ENCODE measurements at regions of chr2 and their contacts with region 1.

Region 1: DNA sequence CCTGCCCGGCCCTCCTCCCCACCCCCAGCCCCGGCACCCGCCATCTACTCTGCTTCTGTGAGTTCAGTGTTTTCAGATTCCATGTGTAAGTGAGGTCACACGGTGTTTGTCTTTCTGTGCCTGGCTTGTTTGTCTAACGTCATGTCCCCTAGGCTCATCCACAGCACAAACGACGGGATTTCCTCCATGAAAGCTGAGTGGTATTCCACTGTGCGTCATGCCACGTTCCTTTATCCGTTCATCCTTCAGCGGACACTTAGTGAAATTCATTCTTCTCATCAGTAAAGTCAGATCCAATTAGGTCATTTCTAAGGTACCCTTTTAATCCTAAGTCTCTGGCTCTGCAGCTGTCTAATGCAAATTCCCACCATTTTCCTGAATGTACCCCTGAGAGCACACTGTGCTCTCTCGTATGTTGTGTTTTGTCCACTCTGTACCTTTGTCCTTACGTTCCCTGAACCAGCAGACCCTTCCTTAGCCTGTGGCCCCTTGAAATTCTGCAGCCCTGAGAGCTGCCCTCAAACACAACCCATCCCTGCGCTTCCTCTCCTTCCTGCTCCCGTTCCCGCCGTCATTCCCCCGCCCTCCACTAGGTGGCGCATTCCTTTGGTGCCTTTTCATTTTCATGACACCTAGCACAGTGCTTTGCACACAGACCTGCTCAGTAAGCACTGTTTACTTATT is 44.1 kb downstream of the TRAPPC12 start:
- DNase-seq: peak; percentile 38 to 98
- H3K4me3 ChIP-seq: no peak overlapping the region
- H3K27ac ChIP-seq: no peak overlapping the region
- H3K4me1 ChIP-seq: no peaks in the 10 kb centered on the region
- H3K27me3 ChIP-seq: no peaks in the 10 kb centered on the region
- CTCF ChIP-seq: peak; percentile 74 to 99 (median 98)
- EP300 ChIP-seq: no peak
- POLR2A ChIP-seq: no peak
- RAD21 ChIP-seq: peak; percentile 52 to 65; a peak in 3 of 4 replicates

Region 2: DNA sequence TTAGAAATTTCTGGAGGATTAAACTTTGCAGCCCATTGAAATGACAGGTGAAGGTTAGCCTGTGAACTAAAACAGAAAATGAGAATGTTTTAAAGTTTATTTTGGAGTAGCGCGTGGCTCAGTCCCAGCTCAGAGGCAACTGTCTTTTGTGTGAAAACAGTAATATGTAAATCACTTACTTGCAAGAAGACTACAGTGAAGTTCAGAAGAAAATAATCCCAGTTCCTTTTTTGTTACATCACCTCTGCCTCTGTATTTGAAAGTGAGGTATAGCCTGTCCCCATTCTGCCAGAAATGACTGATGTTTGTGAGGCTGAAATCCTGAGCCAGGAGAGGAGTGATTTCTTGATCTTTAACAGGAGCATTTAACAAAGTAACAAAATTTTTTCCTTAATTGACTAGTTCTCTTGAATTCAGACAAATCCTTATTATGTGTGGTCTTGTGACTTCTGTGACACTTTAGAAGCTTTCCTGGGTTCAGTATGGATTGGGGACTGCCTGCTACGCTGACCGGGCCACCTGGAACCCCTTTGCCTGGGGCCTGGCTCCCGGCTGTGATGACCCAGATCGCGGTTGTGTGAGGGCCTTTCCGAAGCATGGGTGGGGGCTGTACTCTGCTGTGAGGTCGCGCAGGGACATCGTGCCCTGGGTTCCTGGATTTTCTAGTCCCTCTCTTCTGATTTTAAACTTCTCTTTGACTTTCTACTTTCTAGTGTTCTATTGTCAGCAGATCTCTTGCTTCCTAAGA is 19.9 kb before region 1 on chr2:
- CTCF ChIA-PET with region 1: interaction called, 20 read pairs
- POLR2A ChIA-PET with region 1: no interaction called
- DNase-seq: no peak
- H3K4me3 ChIP-seq: no peak overlapping the region
- H3K27ac ChIP-seq: no peak overlapping the region
- H3K4me1 ChIP-seq: peaks cover 0 to 11% (median 5%) of the 10 kb centered on the region in 4 experiments; a peak in 6 of 7 replicates
- H3K27me3 ChIP-seq: no peaks in the 10 kb centered on the region
- CTCF ChIP-seq: no peak
- EP300 ChIP-seq: no peak
- POLR2A ChIP-seq: no peak
- RAD21 ChIP-seq: no peak

Region 3: GRCh38 chr2:3443506-3444073 is 20.0 kb after region 1 on chr2:
- CTCF ChIA-PET with region 1: interaction called, 26 read pairs
- POLR2A ChIA-PET with region 1: interaction called, 4 read pairs
- DNase-seq: peak in 1 of 2 experiments; percentile 50
- H3K4me3 ChIP-seq: no peak overlapping the region
- H3K27ac ChIP-seq: no peak overlapping the region
- H3K4me1 ChIP-seq: peaks cover 0 to 3% (median 0%) of the 10 kb centered on the region in 4 experiments; a peak in 1 of 7 replicates
- H3K27me3 ChIP-seq: no peaks in the 10 kb centered on the region
- CTCF ChIP-seq: peak; percentile 79 to 98 (median 88)
- EP300 ChIP-seq: no peak
- POLR2A ChIP-seq: no peak
- RAD21 ChIP-seq: peak; percentile 49 to 61

Region 4: GRCh38 chr2:3449086-3449485 is 25.5 kb after region 1 on chr2:
- CTCF ChIA-PET with region 1: interaction called, 26 read pairs
- POLR2A ChIA-PET with region 1: no interaction called
- DNase-seq: peak in 1 of 2 experiments; percentile 20
- H3K4me3 ChIP-seq: no peak overlapping the region
- H3K27ac ChIP-seq: no peak overlapping the region
- H3K4me1 ChIP-seq: peaks cover 0 to 3% (median 0%) of the 10 kb centered on the region in 4 experiments; a peak in 1 of 7 replicates
- H3K27me3 ChIP-seq: no peaks in the 10 kb centered on the region
- CTCF ChIP-seq: no peak
- EP300 ChIP-seq: no peak
- POLR2A ChIP-seq: no peak
- RAD21 ChIP-seq: no peak

Measured in H1 (cell line).